ENCODE measurements at regions of chr1 and their contacts with region 1.

Region 1: DNA sequence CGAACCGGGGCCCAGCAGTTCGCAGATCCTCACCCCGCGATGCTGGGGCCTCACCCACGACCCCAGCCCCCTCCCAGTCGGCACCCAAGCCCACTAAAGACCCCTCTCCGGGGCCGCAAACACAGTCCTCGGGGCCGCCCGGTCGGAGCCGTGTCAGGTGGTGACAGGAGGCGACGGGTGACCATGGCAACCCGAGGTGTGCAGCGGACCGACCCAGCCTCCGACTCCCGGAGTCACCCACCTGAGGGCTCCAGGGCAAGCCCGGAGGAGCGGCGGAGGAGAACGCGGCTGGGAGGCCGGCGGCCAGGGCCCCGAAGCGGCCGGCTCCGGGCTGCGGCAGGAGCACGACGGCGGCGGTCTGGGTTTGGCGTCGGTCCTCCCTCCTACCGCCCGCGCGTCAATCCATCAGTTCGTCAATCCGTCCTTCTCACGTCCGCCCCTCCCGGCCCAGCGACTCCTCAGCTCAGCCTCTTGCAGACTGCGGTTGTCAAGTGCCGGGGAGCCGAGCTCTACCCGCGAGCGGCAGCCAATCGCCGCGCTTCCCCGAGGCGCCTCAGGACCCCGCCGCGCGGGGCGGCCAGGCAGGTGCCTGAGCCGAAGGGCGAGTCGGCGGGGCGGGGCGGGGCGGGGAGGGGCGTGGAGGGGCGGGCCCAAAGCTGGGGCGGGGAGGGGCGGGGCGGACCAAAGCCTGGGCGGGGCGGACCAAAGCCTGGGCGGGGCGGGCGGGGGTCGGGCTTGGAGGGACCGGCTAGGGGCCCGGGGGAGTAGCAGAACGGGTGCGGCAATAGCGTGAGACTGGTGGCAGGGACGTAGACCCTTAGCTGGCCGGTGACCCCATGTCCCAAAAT is at the start of gene WDR47:
- DNase-seq: peak; percentile 99
- H3K4me3 Mint-ChIP-seq: peak within 1 kb of the TSS; percentile 92
- H3K27ac Mint-ChIP-seq: peak within 1 kb of the TSS; percentile 85
- H3K4me1 Mint-ChIP-seq: peaks cover 15% of the 10 kb centered on the region
- H3K27me3 Mint-ChIP-seq: peaks cover 11% of the 10 kb centered on the region
- total RNA-seq, gene WDR47: 11.8 and 14.0 TPM in 2 replicates

Region 2: GRCh38 chr1:108877348-108878159 is 164.3 kb before region 1 on chr1:
- intact Hi-C with region 1: loop called (anchors 5 kb)
- DNase-seq: peak; percentile 65
- H3K4me3 Mint-ChIP-seq: peak overlapping the region; percentile 93
- H3K27ac Mint-ChIP-seq: peak overlapping the region; percentile 54
- H3K4me1 Mint-ChIP-seq: peaks cover 23% of the 10 kb centered on the region
- H3K27me3 Mint-ChIP-seq: peaks cover 17% of the 10 kb centered on the region

Region 3: GRCh38 chr1:108963052-108963686 is 78.7 kb before region 1 on chr1 and contains the start of gene CLCC1:
- intact Hi-C with region 1: loop called (anchors 2 kb)
- DNase-seq: peak; percentile 98
- H3K4me3 Mint-ChIP-seq: peak within 1 kb of the TSS; percentile 91
- H3K27ac Mint-ChIP-seq: peak within 1 kb of the TSS; percentile 97
- H3K4me1 Mint-ChIP-seq: peaks cover 21% of the 10 kb centered on the region
- H3K27me3 Mint-ChIP-seq: peaks cover 7% of the 10 kb centered on the region
- total RNA-seq, gene CLCC1: 21.5 and 26.2 TPM in 2 replicates

Region 4: GRCh38 chr1:109075531-109076490 is 34.0 kb after region 1 on chr1 and contains the start of gene TAF13:
- intact Hi-C with region 1: loop called (anchors 1 kb)
- DNase-seq: peak; percentile 97
- H3K4me3 Mint-ChIP-seq: peak within 1 kb of the TSS; percentile 93
- H3K27ac Mint-ChIP-seq: peak within 1 kb of the TSS; percentile 92
- H3K4me1 Mint-ChIP-seq: peaks cover 10% of the 10 kb centered on the region
- H3K27me3 Mint-ChIP-seq: no peaks in the 10 kb centered on the region
- total RNA-seq, gene TAF13: 24.9 and 31.7 TPM in 2 replicates

Region 5: GRCh38 chr1:109090196-109091077 is 48.6 kb after region 1 on chr1 and contains the start of gene TMEM167B:
- intact Hi-C with region 1: loop called (anchors 1 kb)
- DNase-seq: peak; percentile 96
- H3K4me3 Mint-ChIP-seq: peak within 1 kb of the TSS; percentile 92
- H3K27ac Mint-ChIP-seq: peak within 1 kb of the TSS; percentile 97
- H3K4me1 Mint-ChIP-seq: peaks cover 23% of the 10 kb centered on the region
- H3K27me3 Mint-ChIP-seq: no peaks in the 10 kb centered on the region
- total RNA-seq, gene TMEM167B: 26.7 and 29.2 TPM in 2 replicates

Region 6: GRCh38 chr1:109099938-109100773 is 58.3 kb after region 1 on chr1:
- intact Hi-C with region 1: loop called (anchors 2 kb)
- DNase-seq: peak; percentile 99
- H3K4me3 Mint-ChIP-seq: peak overlapping the region; percentile 96
- H3K27ac Mint-ChIP-seq: peak overlapping the region; percentile 96
- H3K4me1 Mint-ChIP-seq: peaks cover 11% of the 10 kb centered on the region
- H3K27me3 Mint-ChIP-seq: peaks cover 2% of the 10 kb centered on the region

Region 7: GRCh38 chr1:109161858-109162606 is 120.2 kb after region 1 on chr1:
- intact Hi-C with region 1: no loop called
- DNase-seq: peak; percentile 87
- H3K4me3 Mint-ChIP-seq: peak overlapping the region; percentile 72
- H3K27ac Mint-ChIP-seq: peak overlapping the region; percentile 77
- H3K4me1 Mint-ChIP-seq: peaks cover 19% of the 10 kb centered on the region
- H3K27me3 Mint-ChIP-seq: no peaks in the 10 kb centered on the region

Region 8: DNA sequence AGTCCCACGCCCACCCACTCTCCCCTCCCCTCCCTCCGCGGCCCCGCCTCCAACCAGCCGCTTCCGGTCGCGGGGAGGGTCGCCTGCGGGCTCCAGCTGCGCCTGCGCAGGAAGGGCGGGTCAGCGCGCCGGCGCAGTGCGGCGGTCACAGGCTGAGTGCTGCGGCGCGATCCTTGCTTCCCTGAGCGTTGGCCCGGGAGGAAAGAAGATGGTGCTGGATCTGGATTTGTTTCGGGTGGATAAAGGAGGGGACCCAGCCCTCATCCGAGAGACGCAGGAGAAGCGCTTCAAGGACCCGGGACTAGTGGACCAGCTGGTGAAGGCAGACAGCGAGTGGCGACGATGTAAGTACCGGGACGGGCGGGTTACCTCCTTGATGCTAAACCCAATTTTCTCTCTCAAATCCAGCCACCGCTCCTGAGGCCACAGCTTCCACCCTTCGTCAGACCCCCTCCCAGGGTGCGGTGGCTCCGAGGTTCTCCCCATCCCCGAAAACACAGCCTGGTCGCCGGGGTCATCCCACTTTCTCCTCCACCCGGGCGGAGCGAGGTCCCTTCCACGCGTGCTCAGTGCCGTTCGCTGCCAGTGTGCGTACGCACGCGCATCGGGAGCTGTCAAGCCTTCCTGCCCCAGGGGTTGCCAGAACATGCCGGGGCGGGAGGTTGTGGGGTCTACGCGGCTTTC is 172.1 kb after region 1 on chr1 and contains the start of gene SARS1:
- intact Hi-C with region 1: loop called (anchors 5 kb)
- DNase-seq: peak; percentile 97
- H3K4me3 Mint-ChIP-seq: peak within 1 kb of the TSS; percentile 99
- H3K27ac Mint-ChIP-seq: peak within 1 kb of the TSS; percentile 96
- H3K4me1 Mint-ChIP-seq: peaks cover 25% of the 10 kb centered on the region
- H3K27me3 Mint-ChIP-seq: no peaks in the 10 kb centered on the region
- total RNA-seq, gene SARS1: 141 and 150 TPM in 2 replicates

Measured in activated CD4-positive, alpha-beta T cell treated with anti-CD3 and anti-CD28 coated beads, Interleukin-2, amount 10 ng/mL, durations not matched to agents 24 days and 14 days (primary cell).